Esophagus squamous epithelium (tissue), 5 donors: ENCODE measurements at regions of chr6 and their contacts with region 1.

Region 1: GRCh38 chr6:4066029-4066755 is 12.7 kb downstream of the FAM217A start:
- DNase-seq: no peak
- H3K4me3 ChIP-seq: no peak overlapping the region
- H3K27ac ChIP-seq: no peak overlapping the region
- H3K4me1 ChIP-seq: no peaks in the 10 kb centered on the region
- H3K27me3 ChIP-seq: no peaks in the 10 kb centered on the region
- CTCF ChIP-seq: no peak
- POLR2A ChIP-seq: no peak

Region 2: GRCh38 chr6:4030669-4031068 is 35.5 kb before region 1 on chr6:
- intact Hi-C with region 1: no loop called
- DNase-seq: no peak
- H3K4me3 ChIP-seq: no peak overlapping the region
- H3K27ac ChIP-seq: no peak overlapping the region
- H3K4me1 ChIP-seq: peaks cover 0 to 72% (median 5%) of the 10 kb centered on the region in 3 donors
- H3K27me3 ChIP-seq: no peaks in the 10 kb centered on the region
- CTCF ChIP-seq: no peak
- POLR2A ChIP-seq: no peak

Region 3: DNA sequence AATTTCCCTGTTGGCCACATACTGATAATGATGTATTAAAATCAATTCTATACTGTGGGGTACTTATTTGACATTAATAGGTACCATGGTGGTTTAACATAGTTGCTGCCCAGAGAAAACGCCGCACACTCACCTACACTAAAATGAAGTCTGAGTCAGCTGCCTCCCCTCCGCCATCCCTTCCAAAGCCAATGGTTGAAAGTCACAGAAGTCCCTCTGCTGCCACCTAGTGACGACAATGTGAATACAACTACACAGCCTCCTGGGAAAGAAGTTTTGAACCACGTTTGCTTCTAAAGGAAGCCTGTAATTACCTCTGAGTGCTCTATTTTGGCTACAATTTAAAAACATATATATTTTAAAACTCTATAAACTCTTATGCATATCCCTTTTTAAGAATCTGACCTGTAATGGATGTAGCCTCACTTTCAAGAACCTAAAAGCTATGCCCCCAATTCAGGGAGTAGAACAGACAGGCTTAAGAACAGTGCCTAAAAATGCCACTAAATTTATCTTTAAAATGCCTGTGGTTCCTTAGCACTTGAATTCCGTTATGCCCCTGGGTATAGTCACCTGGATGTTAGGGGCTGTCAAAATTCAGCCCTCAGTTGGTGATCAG is 89.8 kb after region 1 on chr6:
- intact Hi-C with region 1: loop called (anchors 10 kb)
- DNase-seq: no peak
- H3K4me3 ChIP-seq: no peak overlapping the region
- H3K27ac ChIP-seq: no peak overlapping the region
- H3K4me1 ChIP-seq: peaks cover 0 to 3% (median 0%) of the 10 kb centered on the region in 3 donors
- H3K27me3 ChIP-seq: no peaks in the 10 kb centered on the region
- CTCF ChIP-seq: peak; percentile 64 to 86 (median 84)
- POLR2A ChIP-seq: no peak

Region 4: DNA sequence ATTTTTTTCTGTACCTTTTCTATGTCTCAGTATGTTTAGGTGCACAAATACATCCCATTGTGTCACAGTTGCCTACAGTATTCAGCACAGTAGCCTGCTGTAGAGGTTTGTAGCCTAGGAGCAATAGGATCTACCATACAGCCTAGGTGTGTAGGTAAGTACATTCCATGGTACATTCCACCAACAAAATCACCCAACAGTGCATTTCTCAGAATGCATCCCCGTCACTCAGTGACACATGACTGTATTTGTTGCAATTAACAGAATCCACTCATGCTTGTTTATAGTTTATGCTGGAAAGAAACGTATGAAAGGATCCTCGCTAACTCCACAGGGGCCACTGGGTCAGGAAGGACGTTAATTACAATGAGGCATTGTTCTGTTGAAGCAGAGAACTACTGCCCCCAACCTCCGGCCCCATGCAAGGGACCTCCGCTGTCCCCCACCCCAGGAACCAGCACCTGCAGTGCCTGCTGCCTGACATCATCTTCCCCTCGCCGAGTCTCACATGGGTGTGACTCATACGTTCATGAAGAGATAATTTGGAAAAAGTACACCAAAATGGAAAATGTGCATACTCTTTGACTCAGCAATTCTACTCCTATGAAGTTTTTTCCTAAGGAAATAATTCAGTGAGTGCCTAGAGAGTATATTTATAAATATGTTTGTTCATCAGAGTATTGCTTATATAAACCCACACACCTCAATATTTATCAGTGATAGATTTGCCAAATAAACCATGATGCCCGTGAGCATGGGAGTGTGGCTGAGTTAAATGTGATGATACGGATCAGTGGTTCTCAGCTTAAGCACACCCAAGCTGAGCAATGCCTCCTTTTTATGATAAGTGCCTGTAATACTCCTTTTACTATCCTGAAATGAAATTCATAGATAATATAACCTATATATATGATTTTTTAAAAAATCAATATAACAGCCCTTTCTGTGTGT is 225.5 kb after region 1 on chr6:
- intact Hi-C with region 1: no loop called
- DNase-seq: no peak
- H3K4me3 ChIP-seq: no peak overlapping the region
- H3K27ac ChIP-seq: no peak overlapping the region
- H3K4me1 ChIP-seq: peaks cover 5 to 34% (median 8%) of the 10 kb centered on the region in 3 donors
- H3K27me3 ChIP-seq: no peaks in the 10 kb centered on the region
- CTCF ChIP-seq: no peak
- POLR2A ChIP-seq: no peak

Region 5: GRCh38 chr6:4381381-4381780 is 315.2 kb after region 1 on chr6:
- intact Hi-C with region 1: no loop called
- DNase-seq: no peak
- H3K4me3 ChIP-seq: no peak overlapping the region
- H3K27ac ChIP-seq: no peak overlapping the region
- H3K4me1 ChIP-seq: no peaks in the 10 kb centered on the region
- H3K27me3 ChIP-seq: peaks cover 0 to 5% (median 0%) of the 10 kb centered on the region in 4 donors
- CTCF ChIP-seq: no peak
- POLR2A ChIP-seq: no peak